Psoas muscle (tissue), 8 donors: ENCODE measurements at regions of chr10 and their contacts with region 1.

Region 1: GRCh38 chr10:72158176-72158575 is 57.6 kb upstream of the ANAPC16 start:
- DNase-seq: no peak
- ATAC-seq: no peak
- H3K4me3 ChIP-seq: no peak overlapping the region
- H3K27ac ChIP-seq: no peak overlapping the region
- H3K4me1 ChIP-seq: no peaks in the 10 kb centered on the region
- H3K27me3 ChIP-seq: no peaks in the 10 kb centered on the region
- CTCF ChIP-seq: no peak

Region 2: DNA sequence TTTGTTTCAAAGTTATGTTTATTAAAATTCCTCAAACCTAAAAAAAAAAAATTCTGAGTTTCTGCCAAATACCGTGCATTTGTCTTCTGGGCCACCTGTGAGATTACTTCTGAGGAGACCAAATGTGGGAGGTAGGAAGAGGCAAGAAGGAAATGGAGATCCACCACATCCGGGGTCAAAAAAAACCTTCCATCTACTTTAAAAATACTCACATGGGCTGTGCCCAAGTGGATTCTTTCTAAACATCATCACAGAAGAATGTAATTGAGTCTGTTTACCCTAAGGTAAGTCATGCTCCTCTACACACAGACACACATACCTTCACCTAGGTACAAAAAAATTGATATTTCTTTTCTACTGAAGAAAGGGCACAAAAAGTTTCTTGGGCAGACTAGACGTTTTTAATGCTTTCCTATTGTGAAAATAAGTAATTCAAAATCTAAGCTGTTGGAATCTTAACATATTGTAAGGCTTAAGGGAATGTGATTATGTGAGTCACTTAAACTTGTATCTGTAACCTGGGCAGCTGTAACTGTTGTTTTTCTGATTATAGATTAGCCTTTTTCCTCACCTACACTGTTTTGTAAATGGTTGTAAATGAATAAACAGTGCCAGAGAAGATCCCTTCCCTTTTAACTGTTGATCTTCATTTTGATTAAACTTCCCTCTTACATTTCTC is 50.7 kb before region 1 on chr10:
- intact Hi-C with region 1: loop called in 1 of 2 experiments (anchors 5 kb)
- DNase-seq: no peak
- ATAC-seq: no peak
- H3K4me3 ChIP-seq: no peak overlapping the region
- H3K27ac ChIP-seq: no peak overlapping the region
- H3K4me1 ChIP-seq: peaks cover 13% of the 10 kb centered on the region
- H3K27me3 ChIP-seq: no peaks in the 10 kb centered on the region
- CTCF ChIP-seq: no peak